Mammary epithelial cell (primary cell): ENCODE measurements at regions of chr1 and their contacts with region 1.

Region 1: GRCh38 chr1:99707535-99708142 is 58.8 kb downstream of the FRRS1 start:
- DNase-seq: peak; percentile 38
- H3K4me3 ChIP-seq: no peak overlapping the region
- H3K27ac ChIP-seq: no peak overlapping the region
- H3K4me1 ChIP-seq: no peaks in the 10 kb centered on the region
- H3K27me3 ChIP-seq: no peaks in the 10 kb centered on the region
- CTCF ChIP-seq: peak; percentile 84 to 89

Region 2: DNA sequence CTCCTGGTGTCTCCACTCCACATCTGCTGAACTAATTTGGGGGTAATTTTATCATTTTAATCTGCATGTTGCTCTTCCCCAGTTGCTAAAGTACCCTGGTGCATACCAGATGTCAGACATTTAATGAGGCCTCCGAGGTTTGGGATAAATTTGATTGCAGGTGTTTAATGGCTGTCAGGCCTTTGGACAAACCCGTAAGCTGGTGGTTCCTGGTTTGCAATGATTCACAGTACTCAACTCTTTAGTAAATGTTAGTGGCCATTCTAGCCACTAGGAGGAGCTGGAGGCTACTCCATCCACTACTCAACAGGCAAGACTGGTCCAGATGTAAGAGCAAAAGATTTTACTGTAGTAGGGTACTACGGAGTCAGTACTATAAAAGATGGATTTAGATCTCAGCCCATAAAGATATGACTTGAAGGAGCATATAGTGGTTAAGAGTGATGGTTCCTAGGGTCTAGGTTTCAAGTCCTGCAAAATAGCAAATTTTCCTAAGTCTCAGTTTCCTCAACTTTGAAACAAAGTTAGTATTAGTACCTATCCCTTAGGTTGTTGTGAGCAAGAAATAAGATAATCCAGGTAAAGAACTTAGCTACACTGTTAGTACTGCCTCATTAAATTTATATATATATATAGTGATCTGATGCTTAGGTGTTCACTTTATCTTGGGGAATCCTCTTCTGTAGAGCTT is 913.3 kb before region 1 on chr1:
- CTCF ChIA-PET with region 1: no interaction called
- dilution Hi-C with region 1: no loop called
- in situ Hi-C with region 1: loop called in 1 of 2 experiments (anchors 25 kb)
- intact Hi-C with region 1: loop called (anchors 2 kb)
- DNase-seq: peak; percentile 60
- H3K4me3 ChIP-seq: no peak overlapping the region
- H3K27ac ChIP-seq: no peak overlapping the region
- H3K4me1 ChIP-seq: no peaks in the 10 kb centered on the region
- H3K27me3 ChIP-seq: peaks cover 2% of the 10 kb centered on the region
- CTCF ChIP-seq: peak; percentile 78 to 82

Region 3: GRCh38 chr1:99170516-99170915 is 537.1 kb before region 1 on chr1:
- CTCF ChIA-PET with region 1: no interaction called
- dilution Hi-C with region 1: no loop called
- in situ Hi-C with region 1: loop called (anchors 25 kb)
- intact Hi-C with region 1: no loop called
- DNase-seq: peak; percentile 46
- H3K4me3 ChIP-seq: no peak overlapping the region
- H3K27ac ChIP-seq: no peak overlapping the region
- H3K4me1 ChIP-seq: no peaks in the 10 kb centered on the region
- H3K27me3 ChIP-seq: no peaks in the 10 kb centered on the region
- CTCF ChIP-seq: no peak

Region 4: DNA sequence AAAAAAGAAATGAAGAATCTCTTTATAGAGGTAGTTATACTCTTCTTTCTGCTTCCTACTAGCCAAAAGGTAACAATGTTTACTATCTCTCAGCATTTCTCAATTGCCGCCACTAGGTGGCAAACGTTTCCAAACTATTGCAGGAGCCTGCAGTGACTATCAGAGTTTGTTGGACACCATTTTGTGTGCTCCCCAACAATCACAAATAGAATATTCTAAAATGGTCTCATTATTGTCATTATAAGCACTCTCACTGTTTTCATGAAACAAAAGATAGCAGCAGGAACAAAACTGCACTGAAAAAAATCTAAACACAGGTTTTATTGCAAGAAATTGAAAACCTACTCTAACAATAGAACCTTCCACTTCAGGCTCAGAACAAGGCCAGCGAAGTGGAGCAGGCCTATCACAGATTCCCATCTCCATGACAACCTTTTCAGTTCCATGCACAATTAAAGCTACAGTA is 527.3 kb before region 1 on chr1:
- CTCF ChIA-PET with region 1: interaction called, 10 read pairs
- dilution Hi-C with region 1: no loop called
- in situ Hi-C with region 1: no loop called
- intact Hi-C with region 1: loop called (anchors 1 kb)
- DNase-seq: peak; percentile 62
- H3K4me3 ChIP-seq: no peak overlapping the region
- H3K27ac ChIP-seq: no peak overlapping the region
- H3K4me1 ChIP-seq: no peaks in the 10 kb centered on the region
- H3K27me3 ChIP-seq: no peaks in the 10 kb centered on the region
- CTCF ChIP-seq: peak; percentile 73 to 89

Region 5: DNA sequence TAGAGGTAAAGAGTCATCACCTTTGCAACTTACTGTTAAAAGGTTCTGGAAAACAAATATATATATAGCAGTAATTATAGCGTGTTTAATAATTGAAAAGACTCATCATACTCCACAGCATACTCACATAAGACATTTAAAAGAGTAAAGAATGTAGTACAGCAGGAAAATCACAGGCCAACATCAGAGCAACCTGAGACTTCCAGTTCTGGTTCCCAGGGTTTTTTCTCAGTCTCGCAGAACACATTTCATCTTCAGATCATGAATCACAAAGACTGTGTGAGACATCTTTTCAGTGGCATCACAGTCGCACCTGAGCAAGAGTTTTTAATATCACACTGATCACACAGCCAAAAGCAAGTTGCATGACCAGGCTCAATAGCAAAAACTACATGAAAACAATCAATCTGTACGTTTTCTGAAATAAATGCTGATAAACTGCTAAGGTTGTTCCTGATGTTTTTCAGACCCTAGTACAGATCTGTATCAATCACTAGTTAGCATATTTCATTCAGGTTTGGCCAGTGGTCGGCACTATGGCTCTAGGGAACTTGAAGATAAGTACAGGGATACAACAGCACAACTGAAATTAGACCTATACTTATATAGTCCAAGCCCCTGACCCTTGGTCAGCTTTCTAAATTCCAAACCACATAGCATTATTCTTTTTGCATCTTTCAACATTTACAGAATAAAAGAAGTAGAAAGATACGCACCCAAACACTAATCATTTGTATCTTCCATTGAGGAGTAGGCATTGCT is 300.8 kb before region 1 on chr1:
- CTCF ChIA-PET with region 1: no interaction called
- dilution Hi-C with region 1: no loop called
- in situ Hi-C with region 1: no loop called
- intact Hi-C with region 1: loop called (anchors 5 kb)
- DNase-seq: no peak
- H3K4me3 ChIP-seq: no peak overlapping the region
- H3K27ac ChIP-seq: no peak overlapping the region
- H3K4me1 ChIP-seq: no peaks in the 10 kb centered on the region
- H3K27me3 ChIP-seq: peaks cover 2% of the 10 kb centered on the region
- CTCF ChIP-seq: no peak

Region 6: DNA sequence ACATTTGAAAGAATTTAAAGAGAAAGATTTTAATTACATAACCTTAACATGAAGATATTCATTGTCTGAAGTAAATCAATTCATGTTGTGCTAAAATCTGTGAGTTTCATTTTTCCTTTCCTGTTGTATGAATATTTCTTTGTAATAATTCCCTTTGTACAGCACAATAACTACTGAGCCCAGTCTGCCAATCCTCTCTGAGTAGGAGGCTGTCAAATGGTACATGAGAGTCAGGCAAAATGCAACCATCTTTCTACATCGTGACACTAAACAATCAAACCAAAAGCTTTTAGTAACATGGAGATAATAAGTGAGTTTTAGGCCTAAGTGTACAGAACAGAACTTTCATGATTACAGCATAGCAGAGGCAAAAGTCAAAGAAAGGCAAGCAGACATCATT is 277.9 kb before region 1 on chr1:
- CTCF ChIA-PET with region 1: no interaction called
- dilution Hi-C with region 1: no loop called
- in situ Hi-C with region 1: no loop called
- intact Hi-C with region 1: no loop called
- DNase-seq: no peak
- H3K4me3 ChIP-seq: no peak overlapping the region
- H3K27ac ChIP-seq: no peak overlapping the region
- H3K4me1 ChIP-seq: no peaks in the 10 kb centered on the region
- H3K27me3 ChIP-seq: no peaks in the 10 kb centered on the region
- CTCF ChIP-seq: no peak

Region 7: DNA sequence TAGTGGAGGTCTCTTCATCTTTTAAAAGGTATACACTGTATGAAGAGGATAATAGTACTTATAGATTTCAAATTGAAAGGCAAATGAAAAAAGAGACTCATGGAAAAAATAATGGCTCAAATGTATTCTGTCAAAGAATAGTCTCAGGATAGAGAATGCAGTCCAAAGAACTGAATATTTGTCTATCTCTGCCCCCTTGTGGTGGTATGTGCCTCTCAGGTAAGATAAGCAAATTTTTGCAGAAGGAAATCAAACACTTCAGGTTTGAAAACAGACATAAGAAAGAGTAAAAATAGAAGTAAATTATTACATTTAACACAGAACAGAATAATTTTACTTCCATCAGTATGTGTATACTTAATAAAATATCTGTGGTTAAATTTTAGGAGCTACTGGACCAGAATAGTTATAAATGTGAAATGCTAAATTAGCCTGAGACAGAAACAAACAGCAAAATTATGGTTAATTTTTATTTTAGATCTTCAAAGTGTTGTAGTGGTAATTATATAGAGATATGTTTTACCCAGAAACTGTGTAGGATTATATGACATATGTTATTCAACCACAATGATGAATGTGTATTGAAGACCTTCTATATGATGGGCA is 226.1 kb before region 1 on chr1:
- CTCF ChIA-PET with region 1: no interaction called
- dilution Hi-C with region 1: no loop called
- in situ Hi-C with region 1: no loop called
- intact Hi-C with region 1: loop called (anchors 1 kb)
- DNase-seq: peak; percentile 35
- H3K4me3 ChIP-seq: no peak overlapping the region
- H3K27ac ChIP-seq: no peak overlapping the region
- H3K4me1 ChIP-seq: no peaks in the 10 kb centered on the region
- H3K27me3 ChIP-seq: no peaks in the 10 kb centered on the region
- CTCF ChIP-seq: peak; percentile 72

Region 8: DNA sequence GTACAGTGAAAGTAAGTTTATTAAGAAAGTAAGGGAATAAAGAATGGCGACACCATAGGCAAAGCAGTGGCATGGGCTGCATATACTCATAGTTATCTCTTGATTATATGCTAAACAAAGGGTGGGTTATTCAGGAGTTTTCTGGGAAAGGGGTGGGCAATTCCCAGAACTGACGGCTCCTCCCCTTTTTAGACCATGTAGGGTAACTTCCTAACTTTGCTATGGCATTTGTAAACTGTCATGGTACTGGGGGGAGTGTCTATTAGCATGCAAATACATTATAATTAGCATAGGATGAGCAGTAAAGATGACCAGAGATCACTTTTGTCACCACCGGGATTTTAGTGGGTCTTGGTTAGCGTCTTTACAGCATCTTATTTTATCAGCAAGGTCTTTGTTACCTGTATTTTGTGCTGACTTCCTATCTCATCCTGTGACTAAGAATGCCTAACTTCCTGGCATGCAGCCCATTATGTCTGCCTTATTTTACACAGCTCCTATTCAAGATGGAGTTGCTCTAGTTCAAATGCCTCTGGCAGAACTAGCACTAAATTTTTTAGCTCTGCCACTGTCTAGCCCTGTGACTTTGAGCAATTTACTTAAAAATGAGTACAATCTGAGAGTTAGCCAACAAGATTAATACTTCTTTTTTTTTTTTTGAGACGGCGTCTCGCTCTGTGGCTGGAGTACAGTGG is 172.0 kb before region 1 on chr1:
- CTCF ChIA-PET with region 1: no interaction called
- dilution Hi-C with region 1: no loop called
- in situ Hi-C with region 1: no loop called
- intact Hi-C with region 1: loop called (anchors 5 kb)
- DNase-seq: peak; percentile 61
- H3K4me3 ChIP-seq: no peak overlapping the region
- H3K27ac ChIP-seq: no peak overlapping the region
- H3K4me1 ChIP-seq: no peaks in the 10 kb centered on the region
- H3K27me3 ChIP-seq: no peaks in the 10 kb centered on the region
- CTCF ChIP-seq: no peak

Region 9: GRCh38 chr1:99681583-99681982 is 26.1 kb before region 1 on chr1:
- CTCF ChIA-PET with region 1: no interaction called
- dilution Hi-C with region 1: no loop called
- in situ Hi-C with region 1: no loop called
- intact Hi-C with region 1: no loop called
- DNase-seq: no peak
- H3K4me3 ChIP-seq: no peak overlapping the region
- H3K27ac ChIP-seq: no peak overlapping the region
- H3K4me1 ChIP-seq: peaks cover 6% of the 10 kb centered on the region
- H3K27me3 ChIP-seq: no peaks in the 10 kb centered on the region
- CTCF ChIP-seq: no peak

Region 10: DNA sequence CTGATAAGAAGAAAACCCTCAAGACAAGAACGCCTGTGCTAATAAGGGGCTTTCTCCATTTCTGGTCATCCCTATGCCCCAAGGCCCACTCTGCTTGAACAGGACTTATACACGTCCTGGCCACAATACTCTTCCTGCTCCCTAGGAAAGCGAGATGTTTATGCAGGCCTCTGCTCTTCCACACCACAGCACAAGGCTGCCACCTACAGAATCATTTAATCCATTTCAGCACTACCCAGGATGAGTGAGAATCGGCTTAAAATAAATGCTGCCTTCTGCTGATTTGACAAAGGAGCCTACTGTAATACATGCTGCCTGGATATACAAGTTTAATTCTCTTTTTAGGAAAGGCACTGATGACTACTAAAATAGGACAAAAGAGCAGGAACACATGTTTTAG is 29.4 kb after region 1 on chr1:
- CTCF ChIA-PET with region 1: no interaction called
- dilution Hi-C with region 1: no loop called
- in situ Hi-C with region 1: no loop called
- intact Hi-C with region 1: no loop called
- DNase-seq: peak; percentile 32
- H3K4me3 ChIP-seq: no peak overlapping the region
- H3K27ac ChIP-seq: no peak overlapping the region
- H3K4me1 ChIP-seq: no peaks in the 10 kb centered on the region
- H3K27me3 ChIP-seq: no peaks in the 10 kb centered on the region
- CTCF ChIP-seq: peak; percentile 30 to 55

Region 11: DNA sequence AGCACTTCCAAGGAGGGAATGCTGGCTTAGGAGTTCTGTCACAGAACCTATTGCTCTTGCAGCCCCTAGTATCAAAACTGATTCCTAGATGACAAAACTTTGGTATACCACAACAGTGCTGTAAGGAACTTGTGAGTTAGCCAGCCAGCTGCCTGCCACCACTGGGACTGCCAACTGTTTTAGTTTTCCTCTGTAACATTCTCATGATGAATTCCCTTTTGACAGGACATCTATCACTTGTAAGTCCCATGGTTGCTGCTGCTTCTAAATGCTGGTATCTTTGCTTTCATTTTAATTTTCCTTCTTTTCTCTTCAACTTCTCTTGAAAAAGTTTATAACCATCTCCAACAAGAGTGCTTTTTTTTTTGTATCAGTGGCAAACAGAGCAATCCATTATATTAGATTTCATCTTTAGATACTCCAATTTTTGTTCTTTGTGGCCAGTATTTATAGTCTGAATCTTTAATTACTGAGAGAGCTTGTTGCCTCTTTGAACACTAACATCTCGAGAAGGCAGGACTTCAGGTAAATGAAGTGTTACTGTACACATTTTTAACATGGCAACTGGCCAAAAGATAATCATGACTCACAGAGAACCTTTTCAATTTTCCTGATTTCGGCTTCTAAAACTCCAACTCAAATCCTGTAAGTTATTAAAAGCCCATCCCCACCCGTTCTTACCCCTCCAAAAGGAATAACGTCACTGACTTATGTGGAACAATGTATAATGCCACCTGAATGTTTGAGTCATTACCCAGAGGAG is 522.2 kb after region 1 on chr1:
- CTCF ChIA-PET with region 1: no interaction called
- dilution Hi-C with region 1: no loop called
- in situ Hi-C with region 1: no loop called
- intact Hi-C with region 1: no loop called
- DNase-seq: no peak
- H3K4me3 ChIP-seq: no peak overlapping the region
- H3K27ac ChIP-seq: no peak overlapping the region
- H3K4me1 ChIP-seq: no peaks in the 10 kb centered on the region
- H3K27me3 ChIP-seq: no peaks in the 10 kb centered on the region
- CTCF ChIP-seq: no peak